Motor neuron (in vitro differentiated cells): ENCODE measurements at regions of chr13 and their contacts with region 1.

Region 1: GRCh38 chr13:24355103-24355502 is 45.7 kb downstream of the C1QTNF9 start:
- ATAC-seq: no peak
- H3K4me3 ChIP-seq: no peak overlapping the region
- H3K27ac ChIP-seq: no peak overlapping the region
- H3K4me1 ChIP-seq: no peaks in the 10 kb centered on the region

Region 2: GRCh38 chr13:22925881-22926747 is 1429.0 kb before region 1 on chr13:
- in situ Hi-C with region 1: loop called in 1 of 9 experiments (anchors 25 kb)
- ATAC-seq: peak in 7 of 8 experiments; percentile 43 to 98 (median 85)
- H3K4me3 ChIP-seq: peak overlapping the region in 2 of 5 donors; percentile 21 to 26
- H3K27ac ChIP-seq: peak overlapping the region in 1 of 2 donors; percentile 76
- H3K4me1 ChIP-seq: no peaks in the 10 kb centered on the region

Region 3: DNA sequence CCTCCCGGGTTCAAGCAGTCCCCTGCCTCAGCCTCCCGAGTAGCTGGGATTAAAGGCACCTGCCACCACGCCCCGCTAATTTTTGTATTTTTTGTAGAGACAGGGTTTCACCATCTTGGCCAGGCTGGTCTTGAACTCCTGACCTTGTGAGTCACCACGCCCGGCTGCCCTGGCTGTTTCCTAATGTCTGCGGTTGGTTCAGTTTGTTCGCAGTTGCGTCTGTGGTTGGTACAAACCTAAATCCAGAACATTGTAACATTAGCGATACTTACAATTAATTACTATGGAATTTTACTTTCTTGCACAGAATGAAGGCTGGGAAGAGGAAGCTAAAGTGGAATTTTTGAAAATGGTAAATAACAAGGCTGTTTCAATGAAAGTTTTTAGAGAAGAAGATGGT is 447.0 kb after region 1 on chr13:
- in situ Hi-C with region 1: no loop called
- ATAC-seq: no peak
- H3K4me3 ChIP-seq: no peak overlapping the region
- H3K27ac ChIP-seq: no peak overlapping the region
- H3K4me1 ChIP-seq: no peaks in the 10 kb centered on the region